Transverse colon (tissue), 4 donors: ENCODE measurements at regions of chr6 and their contacts with region 1.

Region 1: GRCh38 chr6:67252663-67253062 is 1382.4 kb upstream of the ADGRB3 start:
- DNase-seq: no peak
- H3K4me3 ChIP-seq: no peak overlapping the region
- H3K27ac ChIP-seq: no peak overlapping the region
- H3K4me1 ChIP-seq: no peaks in the 10 kb centered on the region
- H3K27me3 ChIP-seq: no peaks in the 10 kb centered on the region
- CTCF ChIP-seq: no peak
- EP300 ChIP-seq: no peak
- POLR2A ChIP-seq: no peak

Region 2: GRCh38 chr6:65416621-65417020 is 1836.0 kb before region 1 on chr6:
- in situ Hi-C with region 1: no loop called
- intact Hi-C with region 1: loop called (anchors 5 kb)
- DNase-seq: no peak
- H3K4me3 ChIP-seq: no peak overlapping the region
- H3K27ac ChIP-seq: no peak overlapping the region
- H3K4me1 ChIP-seq: no peaks in the 10 kb centered on the region
- H3K27me3 ChIP-seq: no peaks in the 10 kb centered on the region
- CTCF ChIP-seq: no peak
- EP300 ChIP-seq: no peak
- POLR2A ChIP-seq: no peak

Region 3: GRCh38 chr6:67265996-67266921 is 13.6 kb after region 1 on chr6:
- in situ Hi-C with region 1: no loop called
- intact Hi-C with region 1: loop called (anchors 2 kb)
- DNase-seq: no peak
- H3K4me3 ChIP-seq: no peak overlapping the region
- H3K27ac ChIP-seq: no peak overlapping the region
- H3K4me1 ChIP-seq: no peaks in the 10 kb centered on the region
- H3K27me3 ChIP-seq: no peaks in the 10 kb centered on the region
- CTCF ChIP-seq: no peak
- EP300 ChIP-seq: no peak
- POLR2A ChIP-seq: no peak